Gastrocnemius medialis (tissue), 4 donors: ENCODE measurements at regions of chr12 and their contacts with region 1.

Region 1: DNA sequence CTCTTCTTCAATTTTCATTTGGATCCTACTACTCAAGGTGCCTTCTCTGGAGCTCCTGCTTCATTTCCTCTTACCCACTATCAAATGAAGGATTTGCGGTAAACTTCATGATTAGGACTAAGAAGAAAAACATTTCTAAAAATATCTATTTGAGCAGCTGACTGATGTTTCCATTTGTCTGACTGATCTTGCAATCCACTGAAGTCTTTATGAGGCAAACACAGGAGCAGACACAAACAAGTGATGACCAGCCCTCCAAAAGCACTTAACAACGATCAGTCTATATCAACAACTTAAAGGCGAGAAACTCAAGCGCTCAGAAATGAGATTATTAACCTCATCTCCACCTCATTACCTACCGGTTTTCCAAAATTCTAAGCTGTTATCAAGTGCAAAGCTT is 26.2 kb downstream of the OSBPL8 start:
- DNase-seq: no peak
- ATAC-seq: peak; percentile 32 to 68
- H3K4me3 ChIP-seq: peak overlapping the region in 1 of 4 donors; percentile 32
- H3K27ac ChIP-seq: peak overlapping the region; percentile 45 to 67 (median 53)
- H3K4me1 ChIP-seq: peaks cover 21 to 29% of the 10 kb centered on the region in 2 donors
- H3K27me3 ChIP-seq: no peaks in the 10 kb centered on the region
- CTCF ChIP-seq: no peak
- POLR2A ChIP-seq: peak; percentile 13 to 37

Region 2: DNA sequence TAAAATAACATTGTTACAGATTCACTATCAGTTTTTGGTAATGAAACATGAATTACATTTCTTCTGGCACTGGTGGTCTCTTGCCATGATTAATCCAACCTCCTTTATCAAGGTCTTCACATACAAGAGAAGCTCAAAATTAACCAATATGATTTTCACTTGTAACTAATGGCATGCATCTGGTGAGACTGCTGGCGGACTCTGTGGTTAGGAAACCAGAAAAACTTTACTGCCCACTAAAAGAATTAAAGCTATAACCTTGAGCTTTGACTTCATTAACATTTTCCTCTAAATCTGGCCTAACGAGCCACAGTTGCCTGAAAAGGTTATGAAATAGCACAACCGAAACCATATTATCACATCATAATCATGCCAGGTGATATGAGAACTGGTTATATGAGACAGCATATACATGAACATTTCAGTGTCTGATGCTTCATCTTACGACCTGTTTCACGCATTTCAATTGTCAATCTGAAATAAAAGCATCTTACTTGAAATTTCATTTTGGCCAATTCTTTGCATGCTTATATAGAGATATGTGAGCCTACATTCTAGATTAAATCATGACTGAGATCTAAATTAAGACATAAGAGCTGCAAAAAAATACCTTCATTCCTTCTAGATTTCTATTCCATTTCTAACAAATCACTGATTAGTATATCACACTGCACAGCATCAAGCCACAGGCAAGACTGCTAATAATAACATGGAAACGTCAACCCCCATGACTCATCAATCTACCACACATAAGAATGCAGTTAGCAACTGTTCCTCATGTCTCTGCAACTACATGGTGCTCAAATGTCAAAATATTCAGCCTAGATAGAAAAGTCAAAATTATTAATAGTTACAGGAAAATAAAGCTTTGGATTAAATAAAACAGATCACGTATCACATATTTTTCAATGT is 63.0 kb before region 1 on chr12:
- in situ Hi-C with region 1: no loop called
- intact Hi-C with region 1: loop called (anchors 5 kb)
- DNase-seq: peak; percentile 23 to 59
- ATAC-seq: peak; percentile 100
- H3K4me3 ChIP-seq: peak overlapping the region in 1 of 4 donors; percentile 4
- H3K27ac ChIP-seq: peak overlapping the region; percentile 79 to 87 (median 84)
- H3K4me1 ChIP-seq: peaks cover 31 to 41% of the 10 kb centered on the region in 2 donors
- H3K27me3 ChIP-seq: no peaks in the 10 kb centered on the region
- CTCF ChIP-seq: no peak
- POLR2A ChIP-seq: no peak

Region 3: DNA sequence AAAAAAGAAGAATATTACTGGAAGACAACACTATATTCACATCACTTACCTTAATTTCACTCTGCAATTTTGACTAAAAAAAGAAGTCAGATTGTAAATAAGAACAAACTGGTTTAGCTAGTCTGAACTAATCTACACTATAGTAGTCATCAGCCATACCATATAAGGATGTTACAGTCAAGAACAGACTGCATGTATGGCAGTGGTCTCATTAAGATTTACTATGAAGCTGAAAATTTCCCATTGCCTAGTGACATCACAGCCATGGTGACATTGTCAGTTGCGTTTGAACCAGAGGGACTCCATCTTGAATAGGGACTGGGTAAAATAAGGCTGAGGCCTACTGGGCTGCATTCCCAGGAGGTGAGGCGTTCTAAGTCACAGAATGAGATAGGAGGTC is 25.2 kb before region 1 on chr12:
- in situ Hi-C with region 1: no loop called
- intact Hi-C with region 1: no loop called
- DNase-seq: no peak
- ATAC-seq: no peak
- H3K4me3 ChIP-seq: no peak overlapping the region
- H3K27ac ChIP-seq: no peak overlapping the region
- H3K4me1 ChIP-seq: no peaks in the 10 kb centered on the region
- H3K27me3 ChIP-seq: no peaks in the 10 kb centered on the region
- CTCF ChIP-seq: no peak
- POLR2A ChIP-seq: no peak